CD14-positive monocyte (primary cell): ENCODE measurements at regions of chr19 and their contacts with region 1.

Region 1: DNA sequence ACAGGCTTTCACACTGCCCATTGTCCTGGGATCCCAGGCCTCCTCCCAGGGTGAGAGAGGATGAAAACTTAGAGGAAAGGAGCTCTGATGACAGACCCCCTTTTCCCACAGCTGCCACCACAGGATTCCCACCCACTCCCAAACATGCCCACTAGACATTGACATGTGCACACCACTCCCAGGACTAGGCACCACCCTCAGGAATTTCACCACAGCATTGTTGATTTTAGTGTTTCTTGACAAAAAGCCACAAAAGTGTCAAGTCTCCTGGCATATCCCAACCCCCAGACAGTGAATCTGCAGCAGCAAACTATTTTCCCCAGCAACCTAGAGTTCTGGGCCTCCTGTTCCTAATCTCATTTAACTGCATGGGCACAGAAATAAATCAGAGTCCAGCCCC is 10.1 kb downstream of the ZNF714 start:
- DNase-seq: no peak
- H3K4me3 ChIP-seq: no peak overlapping the region
- H3K4me3 Mint-ChIP-seq: no peak overlapping the region
- H3K27ac ChIP-seq: no peak overlapping the region
- H3K27ac Mint-ChIP-seq: peak overlapping the region in 1 of 7 donors; percentile 69
- H3K4me1 ChIP-seq: no peaks in the 10 kb centered on the region
- H3K4me1 Mint-ChIP-seq: no peaks in the 10 kb centered on the region
- H3K27me3 ChIP-seq: no peaks in the 10 kb centered on the region
- H3K27me3 Mint-ChIP-seq: no peaks in the 10 kb centered on the region
- CTCF ChIP-seq: no peak

Region 2: GRCh38 chr19:21151460-21151859 is 59.4 kb after region 1 on chr19:
- intact Hi-C with region 1: loop called in 1 of 2 experiments (anchors 1 kb)
- DNase-seq: no peak
- H3K4me3 ChIP-seq: no peak overlapping the region
- H3K4me3 Mint-ChIP-seq: no peak overlapping the region
- H3K27ac ChIP-seq: no peak overlapping the region
- H3K27ac Mint-ChIP-seq: no peak overlapping the region
- H3K4me1 ChIP-seq: no peaks in the 10 kb centered on the region
- H3K4me1 Mint-ChIP-seq: no peaks in the 10 kb centered on the region
- H3K27me3 ChIP-seq: no peaks in the 10 kb centered on the region
- H3K27me3 Mint-ChIP-seq: no peaks in the 10 kb centered on the region
- CTCF ChIP-seq: no peak